ENCODE measurements at regions of chr6 and their contacts with region 1.

Region 1: GRCh38 chr6:5143634-5144311 is 58.6 kb downstream of the PPP1R3G start:
- DNase-seq: peak; percentile 90
- H3K4me3 Mint-ChIP-seq: no peak overlapping the region
- H3K27ac Mint-ChIP-seq: no peak overlapping the region
- H3K4me1 Mint-ChIP-seq: no peaks in the 10 kb centered on the region
- H3K27me3 Mint-ChIP-seq: no peaks in the 10 kb centered on the region

Region 2: GRCh38 chr6:5020142-5020541 is 123.6 kb before region 1 on chr6:
- CTCF ChIA-PET with region 1: no interaction called
- DNase-seq: no peak
- H3K4me3 Mint-ChIP-seq: no peak overlapping the region
- H3K27ac Mint-ChIP-seq: no peak overlapping the region
- H3K4me1 Mint-ChIP-seq: no peaks in the 10 kb centered on the region
- H3K27me3 Mint-ChIP-seq: peaks cover 16% of the 10 kb centered on the region

Region 3: DNA sequence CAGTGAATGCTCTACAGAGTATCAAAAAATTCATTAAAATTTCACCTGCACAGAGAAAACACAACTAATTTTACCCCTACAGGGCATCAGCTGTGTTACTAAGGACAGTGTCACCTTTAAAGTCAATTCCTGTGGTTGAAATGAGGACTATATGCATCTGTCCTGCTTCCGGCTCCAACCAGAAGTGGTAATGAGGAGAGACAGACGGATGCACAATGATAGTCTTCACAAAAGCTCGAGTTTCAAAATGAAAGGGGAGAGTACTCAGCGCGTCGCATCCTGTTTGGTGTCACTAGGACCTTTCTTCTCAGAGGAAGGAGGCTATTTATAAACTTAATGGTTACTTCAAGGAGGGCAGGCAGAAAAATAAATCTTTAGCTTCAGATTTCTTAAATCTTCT is 30.5 kb after region 1 on chr6:
- CTCF ChIA-PET with region 1: interaction called, 41 read pairs
- DNase-seq: peak; percentile 85
- H3K4me3 Mint-ChIP-seq: peak overlapping the region; percentile 43
- H3K27ac Mint-ChIP-seq: peak overlapping the region; percentile 94
- H3K4me1 Mint-ChIP-seq: peaks cover 76% of the 10 kb centered on the region
- H3K27me3 Mint-ChIP-seq: no peaks in the 10 kb centered on the region

Region 4: DNA sequence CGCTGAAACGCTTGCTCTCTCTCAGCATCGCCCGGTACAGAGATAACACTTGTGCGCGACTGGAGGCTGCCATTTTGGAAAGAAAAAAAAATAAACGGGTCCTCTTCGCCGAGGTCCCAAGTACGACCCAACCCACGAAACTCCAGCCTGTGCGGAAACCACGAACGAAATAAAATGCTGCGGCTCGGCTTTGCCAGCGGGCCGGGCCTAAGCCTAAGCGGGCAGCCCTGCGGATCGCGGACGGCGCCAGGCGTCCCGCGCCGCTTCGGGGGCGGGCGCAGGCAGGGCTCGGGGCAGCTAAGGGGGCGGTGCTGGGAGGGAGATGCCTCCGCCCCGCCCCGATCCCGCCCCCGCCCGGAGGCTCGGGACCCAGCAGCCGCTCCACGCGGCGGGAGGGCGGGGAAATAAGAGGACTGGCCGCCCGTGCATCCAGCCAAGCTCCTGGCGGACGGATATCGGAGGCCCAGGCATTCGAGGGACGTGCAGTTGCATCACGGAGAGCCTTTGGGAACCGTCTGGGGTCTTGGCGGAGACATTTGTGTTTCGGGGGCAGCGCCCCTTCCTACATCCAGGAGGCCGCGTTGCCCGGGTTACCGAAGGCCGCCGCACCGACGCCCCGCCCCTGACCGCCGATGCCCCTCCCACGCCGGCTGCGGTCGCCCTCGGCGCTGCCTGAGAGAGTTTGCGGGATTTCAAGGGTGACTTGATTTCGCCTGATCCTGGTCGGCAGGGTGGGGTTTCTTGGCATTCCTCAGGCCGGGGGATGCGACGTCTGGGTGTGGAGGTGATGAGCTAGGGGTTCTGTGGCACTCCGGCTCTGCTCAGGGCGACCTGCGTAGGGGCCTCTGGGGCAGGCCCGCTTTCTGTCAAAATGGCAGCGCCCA is 117.1 kb after region 1 on chr6 and contains the starts of genes FARS2 and LYRM4:
- CTCF ChIA-PET with region 1: interaction called, 12 read pairs
- DNase-seq: peak; percentile 91
- H3K4me3 Mint-ChIP-seq: peak within 1 kb of the TSS; percentile 98
- H3K27ac Mint-ChIP-seq: peak within 1 kb of the TSS; percentile 100
- H3K4me1 Mint-ChIP-seq: peaks cover 55% of the 10 kb centered on the region
- H3K27me3 Mint-ChIP-seq: no peaks in the 10 kb centered on the region

Region 5: DNA sequence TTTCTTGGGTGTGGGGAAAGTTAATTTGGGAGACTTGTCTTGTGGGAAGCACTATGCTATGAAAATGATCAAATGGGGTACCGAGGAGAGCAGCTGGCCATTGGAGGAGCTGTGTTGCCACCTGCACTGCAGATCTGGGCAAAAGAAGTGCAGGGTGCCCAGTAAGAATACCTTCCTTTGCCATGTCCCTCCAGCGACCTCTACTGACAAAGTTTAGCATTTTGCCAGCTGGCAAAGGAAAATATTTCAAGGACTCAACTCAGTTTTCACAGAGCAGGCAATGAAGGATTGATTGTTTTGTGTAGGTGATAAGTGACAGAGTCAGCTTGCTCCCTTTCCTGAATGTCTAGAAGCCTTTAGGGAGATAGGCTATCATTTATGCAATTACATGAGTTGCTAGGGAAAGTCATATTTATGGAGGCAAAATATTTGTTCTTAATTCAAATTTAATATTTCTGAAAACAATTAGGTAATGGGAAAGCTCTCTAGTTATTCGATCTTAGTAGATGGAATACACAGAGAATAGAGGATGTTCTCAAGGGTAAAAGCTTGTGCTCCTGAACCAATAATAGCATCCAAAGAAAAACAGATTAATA is 236.0 kb after region 1 on chr6:
- CTCF ChIA-PET with region 1: interaction called, 55 read pairs
- DNase-seq: peak; percentile 54
- H3K4me3 Mint-ChIP-seq: no peak overlapping the region
- H3K27ac Mint-ChIP-seq: no peak overlapping the region
- H3K4me1 Mint-ChIP-seq: no peaks in the 10 kb centered on the region
- H3K27me3 Mint-ChIP-seq: no peaks in the 10 kb centered on the region

Measured in activated naive CD4-positive, alpha-beta T cell treated with anti-CD3 and anti-CD28 coated beads, Interleukin-2, amount 10 ng/mL, durations not matched to agents 7 days and 5 days (primary cell).